ENCODE measurements at regions of chr2 and their contacts with region 1.

Region 1: DNA sequence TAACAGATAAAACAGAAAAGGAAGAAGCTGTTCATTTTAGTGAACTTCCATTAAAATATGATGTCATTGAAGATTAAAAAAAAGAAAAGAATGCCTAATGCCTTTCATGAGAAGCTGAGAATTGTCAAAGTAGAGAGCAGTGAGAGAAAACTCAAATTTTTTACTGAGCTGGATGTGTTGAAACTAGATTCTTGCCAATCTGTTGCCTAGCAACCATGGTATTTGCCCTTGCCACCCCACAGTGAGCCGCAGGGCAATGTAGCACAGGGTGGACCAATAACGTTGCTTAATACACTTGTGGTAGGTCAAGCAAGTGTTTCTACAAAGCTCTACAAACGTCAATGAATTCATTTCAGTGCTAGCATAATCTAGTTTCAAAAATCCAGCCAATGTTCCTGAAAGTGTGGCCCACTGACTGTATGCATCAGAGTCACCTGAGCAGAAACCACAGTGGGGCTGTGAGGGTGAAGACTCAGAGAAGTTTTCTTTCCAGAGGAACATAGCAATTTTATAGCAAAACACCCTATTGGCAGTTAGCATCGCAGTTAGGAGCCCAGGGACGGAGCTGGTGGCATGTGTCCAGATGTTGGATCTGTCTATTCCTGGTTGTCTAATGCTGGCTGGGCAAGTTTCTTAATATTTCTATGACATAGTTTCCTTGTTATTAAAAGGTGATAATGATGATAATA is 132.2 kb downstream of the DOCK10 start:
- DNase-seq: peak in 1 of 9 donors; percentile 27
- ATAC-seq: peak; percentile 91
- H3K4me3 ChIP-seq: no peak overlapping the region
- H3K4me3 Mint-ChIP-seq: peak overlapping the region in 7 of 10 donors; percentile 2 to 51 (median 14)
- H3K27ac ChIP-seq: no peak overlapping the region
- H3K27ac Mint-ChIP-seq: peak overlapping the region; percentile 48 to 85 (median 68)
- H3K4me1 ChIP-seq: peaks cover 8% of the 10 kb centered on the region in 2 donors
- H3K4me1 Mint-ChIP-seq: peaks cover 41 to 77% (median 67%) of the 10 kb centered on the region in 7 donors
- H3K27me3 ChIP-seq: no peaks in the 10 kb centered on the region
- H3K27me3 Mint-ChIP-seq: no peaks in the 10 kb centered on the region

Region 2: DNA sequence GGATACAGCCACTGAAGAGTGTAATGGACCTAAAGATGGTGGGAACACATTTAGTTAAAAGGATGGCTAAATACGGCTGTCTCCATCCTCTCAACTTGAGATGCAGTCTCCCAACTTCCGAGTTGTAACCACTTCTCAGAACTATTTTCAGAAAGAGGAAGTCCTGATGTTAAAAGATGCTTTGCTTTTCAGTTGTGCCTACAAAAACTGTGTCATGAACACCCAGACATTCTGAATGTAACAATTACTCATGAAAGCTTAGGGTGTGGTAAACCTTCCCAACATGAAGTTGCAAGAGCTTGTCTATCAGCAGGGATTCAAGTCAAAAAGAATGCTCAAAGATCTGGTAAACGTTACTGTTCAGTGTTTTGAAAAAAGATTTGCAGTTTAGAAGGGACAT is 15.7 kb before region 1 on chr2:
- CTCF ChIA-PET with region 1: no interaction called
- POLR2A ChIA-PET with region 1: interaction called, 3 read pairs
- intact Hi-C with region 1: loop called in 1 of 2 experiments (anchors 2 kb)
- DNase-seq: peak in 4 of 9 donors; percentile 8 to 21 (median 10)
- ATAC-seq: peak; percentile 80
- H3K4me3 ChIP-seq: no peak overlapping the region
- H3K4me3 Mint-ChIP-seq: peak overlapping the region in 6 of 10 donors; percentile 8 to 75 (median 58)
- H3K27ac ChIP-seq: no peak overlapping the region
- H3K27ac Mint-ChIP-seq: peak overlapping the region; percentile 5 to 92 (median 69)
- H3K4me1 ChIP-seq: peaks cover 12 to 16% of the 10 kb centered on the region in 2 donors
- H3K4me1 Mint-ChIP-seq: peaks cover 35 to 76% (median 63%) of the 10 kb centered on the region in 7 donors
- H3K27me3 ChIP-seq: no peaks in the 10 kb centered on the region
- H3K27me3 Mint-ChIP-seq: no peaks in the 10 kb centered on the region

Region 3: GRCh38 chr2:224922142-224922727 is 12.2 kb after region 1 on chr2:
- CTCF ChIA-PET with region 1: no interaction called
- POLR2A ChIA-PET with region 1: interaction called, 4 read pairs
- intact Hi-C with region 1: loop called in 1 of 2 experiments (anchors 1 kb)
- DNase-seq: no peak
- ATAC-seq: peak; percentile 55
- H3K4me3 ChIP-seq: no peak overlapping the region
- H3K4me3 Mint-ChIP-seq: peak overlapping the region in 2 of 10 donors; percentile 15 to 17
- H3K27ac ChIP-seq: peak overlapping the region; percentile 44
- H3K27ac Mint-ChIP-seq: peak overlapping the region; percentile 26 to 99 (median 82)
- H3K4me1 ChIP-seq: peaks cover 35 to 52% of the 10 kb centered on the region in 2 donors
- H3K4me1 Mint-ChIP-seq: peaks cover 36 to 55% (median 50%) of the 10 kb centered on the region in 7 donors
- H3K27me3 ChIP-seq: no peaks in the 10 kb centered on the region
- H3K27me3 Mint-ChIP-seq: no peaks in the 10 kb centered on the region

Region 4: DNA sequence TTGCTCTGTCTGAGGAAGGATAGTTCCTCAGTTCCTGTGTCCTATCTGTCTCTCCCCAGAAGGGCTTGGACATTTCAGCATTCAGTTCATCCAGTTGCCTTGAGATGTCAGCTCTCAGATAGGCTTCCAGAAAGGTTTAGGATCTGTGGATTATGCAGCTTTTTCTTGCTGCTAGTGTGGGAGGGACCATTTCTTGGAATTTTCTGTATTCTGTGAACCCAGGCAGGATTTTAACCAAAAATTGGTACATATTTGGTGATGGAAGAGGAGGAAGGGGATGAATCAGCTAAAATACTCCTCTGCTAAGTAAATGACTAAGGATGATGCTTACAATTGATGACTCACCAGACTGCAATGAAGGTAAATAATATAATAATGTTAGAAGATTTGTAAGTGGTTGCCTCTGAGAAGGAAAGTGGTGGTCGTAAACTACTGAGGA is 190.8 kb after region 1 on chr2:
- CTCF ChIA-PET with region 1: no interaction called
- POLR2A ChIA-PET with region 1: no interaction called
- intact Hi-C with region 1: no loop called
- DNase-seq: no peak
- ATAC-seq: no peak
- H3K4me3 ChIP-seq: no peak overlapping the region
- H3K4me3 Mint-ChIP-seq: no peak overlapping the region
- H3K27ac ChIP-seq: no peak overlapping the region
- H3K27ac Mint-ChIP-seq: no peak overlapping the region
- H3K4me1 ChIP-seq: no peaks in the 10 kb centered on the region
- H3K4me1 Mint-ChIP-seq: no peaks in the 10 kb centered on the region
- H3K27me3 ChIP-seq: no peaks in the 10 kb centered on the region
- H3K27me3 Mint-ChIP-seq: peaks cover 0 to 18% (median 0%) of the 10 kb centered on the region in 5 donors

Measured in naive thymus-derived CD4-positive, alpha-beta T cell (primary cell).